ENCODE measurements at regions of chr6 and their contacts with region 1.

Region 1: GRCh38 chr6:152954443-152954842 is 28.4 kb downstream of the FBXO5 start:
- H3K4me3 ChIP-seq: no peak overlapping the region
- H3K27ac ChIP-seq: no peak overlapping the region
- H3K4me1 ChIP-seq: no peaks in the 10 kb centered on the region
- CTCF ChIP-seq: no peak

Region 2: GRCh38 chr6:152356451-152357061 is 597.9 kb before region 1 on chr6:
- CTCF ChIA-PET with region 1: no interaction called
- POLR2A ChIA-PET with region 1: no interaction called
- H3K4me3 ChIP-seq: no peak overlapping the region
- H3K27ac ChIP-seq: no peak overlapping the region
- H3K4me1 ChIP-seq: no peaks in the 10 kb centered on the region
- CTCF ChIP-seq: peak; percentile 38; the same call in 1 of the 2 replicates

Region 3: GRCh38 chr6:152879681-152880080 is 74.8 kb before region 1 on chr6:
- CTCF ChIA-PET with region 1: no interaction called
- POLR2A ChIA-PET with region 1: no interaction called
- H3K4me3 ChIP-seq: no peak overlapping the region
- H3K27ac ChIP-seq: no peak overlapping the region
- H3K4me1 ChIP-seq: no peaks in the 10 kb centered on the region
- CTCF ChIP-seq: no peak

Region 4: GRCh38 chr6:153023977-153024708 is 69.7 kb after region 1 on chr6:
- CTCF ChIA-PET with region 1: interaction called, 25 read pairs
- POLR2A ChIA-PET with region 1: no interaction called
- H3K4me3 ChIP-seq: no peak overlapping the region
- H3K27ac ChIP-seq: no peak overlapping the region
- H3K4me1 ChIP-seq: no peaks in the 10 kb centered on the region
- CTCF ChIP-seq: peak; percentile 54; the same call in 1 of the 2 replicates

Region 5: GRCh38 chr6:153758516-153758915 is 804.1 kb after region 1 on chr6:
- CTCF ChIA-PET with region 1: no interaction called
- POLR2A ChIA-PET with region 1: no interaction called
- H3K4me3 ChIP-seq: no peak overlapping the region
- H3K27ac ChIP-seq: no peak overlapping the region
- H3K4me1 ChIP-seq: no peaks in the 10 kb centered on the region
- CTCF ChIP-seq: no peak